ENCODE measurements at regions of chr10 and their contacts with region 1.

Region 1: DNA sequence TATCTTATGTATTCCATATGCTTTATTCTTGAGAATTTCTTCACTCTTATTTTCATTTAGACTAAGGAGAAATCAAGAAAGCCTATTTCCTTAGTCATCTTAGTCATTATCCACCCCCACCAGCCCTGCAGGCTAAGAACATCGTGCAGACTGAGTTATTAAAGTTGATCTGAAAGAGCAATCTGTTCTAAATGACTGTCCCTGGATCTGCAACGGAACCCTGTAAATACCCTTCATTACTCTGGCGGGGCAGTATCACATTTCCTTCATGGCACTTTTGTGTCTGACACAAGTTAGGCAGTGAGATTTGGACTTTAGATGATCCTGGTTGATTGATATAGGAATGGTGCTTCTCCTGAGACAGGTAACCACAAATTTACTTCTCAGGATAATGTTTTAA is 3.5 kb upstream of the MYPN start:
- DNase-seq: no peak
- ATAC-seq: peak; percentile 31; the same call in 2 of the 3 replicates
- H3K4me3 ChIP-seq: no peak overlapping the region
- H3K27ac ChIP-seq: no peak overlapping the region
- H3K4me1 ChIP-seq: no peaks in the 10 kb centered on the region
- H3K27me3 ChIP-seq: no peaks in the 10 kb centered on the region
- CTCF ChIP-seq: no peak
- EP300 ChIP-seq: no peak
- POLR2A ChIP-seq: no peak
- RAD21 ChIP-seq: no peak

Region 2: DNA sequence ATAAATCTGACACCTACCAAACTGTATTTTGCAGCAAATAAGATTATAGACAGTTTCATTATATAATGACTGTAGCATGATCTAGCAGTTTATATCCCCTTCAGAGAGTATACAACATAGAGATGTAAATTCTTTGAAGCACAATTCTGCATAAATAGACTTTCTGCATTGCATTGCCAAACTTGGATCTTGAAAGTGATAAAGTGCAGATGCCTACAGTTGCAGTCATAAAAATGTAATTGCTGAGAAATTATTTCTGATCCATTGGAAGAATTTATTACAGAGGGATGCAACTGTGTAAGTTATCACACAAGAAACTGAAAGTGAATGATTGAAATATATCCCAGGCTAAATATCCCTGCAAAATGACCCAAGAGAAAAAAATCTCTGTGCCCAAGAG is 474.9 kb before region 1 on chr10:
- CTCF ChIA-PET with region 1: no interaction called
- POLR2A ChIA-PET with region 1: no interaction called
- RAD21 ChIA-PET with region 1: no interaction called
- SMC1A ChIA-PET with region 1: no interaction called
- in situ Hi-C with region 1: no loop called
- intact Hi-C with region 1: no loop called
- DNase-seq: no peak
- ATAC-seq: no peak
- H3K4me3 ChIP-seq: no peak overlapping the region
- H3K27ac ChIP-seq: no peak overlapping the region
- H3K4me1 ChIP-seq: no peaks in the 10 kb centered on the region; the same call in 1 of the 2 replicates
- H3K27me3 ChIP-seq: no peaks in the 10 kb centered on the region
- CTCF ChIP-seq: no peak
- EP300 ChIP-seq: no peak
- POLR2A ChIP-seq: no peak
- RAD21 ChIP-seq: no peak

Region 3: GRCh38 chr10:67912339-67912946 is 193.4 kb before region 1 on chr10:
- CTCF ChIA-PET with region 1: no interaction called
- POLR2A ChIA-PET with region 1: no interaction called
- RAD21 ChIA-PET with region 1: no interaction called
- SMC1A ChIA-PET with region 1: no interaction called
- in situ Hi-C with region 1: no loop called
- intact Hi-C with region 1: no loop called
- DNase-seq: no peak
- ATAC-seq: no peak
- H3K4me3 ChIP-seq: no peak overlapping the region
- H3K27ac ChIP-seq: no peak overlapping the region
- H3K4me1 ChIP-seq: no peaks in the 10 kb centered on the region
- H3K27me3 ChIP-seq: no peaks in the 10 kb centered on the region
- CTCF ChIP-seq: no peak
- EP300 ChIP-seq: no peak
- POLR2A ChIP-seq: no peak
- RAD21 ChIP-seq: no peak

Region 4: GRCh38 chr10:68088744-68089143 is 17.1 kb before region 1 on chr10:
- CTCF ChIA-PET with region 1: no interaction called
- POLR2A ChIA-PET with region 1: interaction called, 11 read pairs
- RAD21 ChIA-PET with region 1: no interaction called
- SMC1A ChIA-PET with region 1: interaction called, 6 read pairs
- in situ Hi-C with region 1: no loop called
- intact Hi-C with region 1: no loop called
- DNase-seq: no peak
- ATAC-seq: peak; percentile 81
- H3K4me3 ChIP-seq: no peak overlapping the region
- H3K27ac ChIP-seq: no peak overlapping the region
- H3K4me1 ChIP-seq: peaks cover 3% of the 10 kb centered on the region; the same call in 1 of the 2 replicates
- H3K27me3 ChIP-seq: no peaks in the 10 kb centered on the region
- CTCF ChIP-seq: no peak
- EP300 ChIP-seq: no peak
- POLR2A ChIP-seq: no peak
- RAD21 ChIP-seq: no peak